CD8-positive, alpha-beta T cell (primary cell): ENCODE measurements at regions of chr12 and their contacts with region 1.

Region 1: GRCh38 chr12:12645485-12645884 is 33.8 kb downstream of the CREBL2 start:
- DNase-seq: peak in 8 of 9 experiments; percentile 9 to 79 (median 48)
- ATAC-seq: peak; percentile 97
- H3K4me3 ChIP-seq: no peak overlapping the region
- H3K4me3 Mint-ChIP-seq: no peak overlapping the region
- H3K27ac ChIP-seq: no peak overlapping the region
- H3K27ac Mint-ChIP-seq: peak overlapping the region; percentile 50
- H3K4me1 ChIP-seq: no peaks in the 10 kb centered on the region
- H3K4me1 Mint-ChIP-seq: peaks cover 5% of the 10 kb centered on the region
- H3K27me3 ChIP-seq: no peaks in the 10 kb centered on the region
- H3K27me3 Mint-ChIP-seq: no peaks in the 10 kb centered on the region
- CTCF ChIP-seq: peak; percentile 64

Region 2: DNA sequence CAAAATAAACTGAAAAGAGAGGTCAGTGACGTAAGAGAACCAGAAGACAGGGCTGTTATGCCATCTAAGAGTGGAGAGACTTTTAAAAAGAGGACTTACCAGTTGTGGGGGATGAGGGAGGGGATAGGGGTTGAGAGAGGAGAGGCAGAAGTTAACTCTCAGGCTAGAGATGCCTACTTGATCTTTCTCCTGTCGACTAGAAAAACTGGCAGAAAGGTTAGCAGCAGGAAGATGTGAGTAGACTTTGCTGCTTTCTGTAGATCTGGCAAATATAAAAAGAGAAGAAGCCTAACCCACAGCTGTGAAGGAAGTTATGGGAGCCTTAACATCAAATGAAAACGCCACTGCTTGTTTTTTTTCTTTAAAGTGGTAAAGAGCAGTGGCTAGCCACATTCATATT is 23.1 kb before region 1 on chr12:
- CTCF ChIA-PET with region 1: interaction called, 12 read pairs
- POLR2A ChIA-PET with region 1: no interaction called
- intact Hi-C with region 1: no loop called
- DNase-seq: peak in 4 of 9 experiments; percentile 19 to 74 (median 36)
- ATAC-seq: peak; percentile 91
- H3K4me3 ChIP-seq: peak overlapping the region in 1 of 2 experiments; percentile 15
- H3K4me3 Mint-ChIP-seq: peak overlapping the region; percentile 67
- H3K27ac ChIP-seq: peak overlapping the region; percentile 50 to 66
- H3K27ac Mint-ChIP-seq: peak overlapping the region; percentile 87
- H3K4me1 ChIP-seq: peaks cover 48% of the 10 kb centered on the region
- H3K4me1 Mint-ChIP-seq: peaks cover 73% of the 10 kb centered on the region
- H3K27me3 ChIP-seq: no peaks in the 10 kb centered on the region
- H3K27me3 Mint-ChIP-seq: no peaks in the 10 kb centered on the region
- CTCF ChIP-seq: no peak

Region 3: DNA sequence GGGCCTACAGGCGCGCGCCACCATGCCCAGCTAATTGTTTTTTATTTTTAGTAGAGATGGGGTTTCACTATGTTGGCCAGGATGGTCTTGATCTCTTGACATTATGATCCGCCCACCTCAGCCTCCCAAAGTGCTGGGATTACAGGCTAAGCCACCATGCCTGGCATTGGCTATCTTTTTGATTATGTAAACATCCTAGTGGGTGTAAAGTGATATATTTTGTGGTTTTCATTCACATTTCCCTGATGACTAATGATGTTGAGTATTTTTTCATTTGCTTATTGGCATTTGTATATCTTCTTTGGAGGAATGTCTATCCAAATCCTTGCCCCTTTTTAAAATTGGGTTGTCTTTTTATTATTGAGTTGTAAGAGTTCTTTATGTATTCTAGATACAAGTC is 17.5 kb before region 1 on chr12:
- CTCF ChIA-PET with region 1: interaction called, 39 read pairs
- POLR2A ChIA-PET with region 1: no interaction called
- intact Hi-C with region 1: no loop called
- DNase-seq: no peak
- ATAC-seq: no peak
- H3K4me3 ChIP-seq: no peak overlapping the region
- H3K4me3 Mint-ChIP-seq: no peak overlapping the region
- H3K27ac ChIP-seq: no peak overlapping the region
- H3K27ac Mint-ChIP-seq: no peak overlapping the region
- H3K4me1 ChIP-seq: peaks cover 44% of the 10 kb centered on the region
- H3K4me1 Mint-ChIP-seq: peaks cover 79% of the 10 kb centered on the region
- H3K27me3 ChIP-seq: no peaks in the 10 kb centered on the region
- H3K27me3 Mint-ChIP-seq: no peaks in the 10 kb centered on the region
- CTCF ChIP-seq: no peak

Region 4: DNA sequence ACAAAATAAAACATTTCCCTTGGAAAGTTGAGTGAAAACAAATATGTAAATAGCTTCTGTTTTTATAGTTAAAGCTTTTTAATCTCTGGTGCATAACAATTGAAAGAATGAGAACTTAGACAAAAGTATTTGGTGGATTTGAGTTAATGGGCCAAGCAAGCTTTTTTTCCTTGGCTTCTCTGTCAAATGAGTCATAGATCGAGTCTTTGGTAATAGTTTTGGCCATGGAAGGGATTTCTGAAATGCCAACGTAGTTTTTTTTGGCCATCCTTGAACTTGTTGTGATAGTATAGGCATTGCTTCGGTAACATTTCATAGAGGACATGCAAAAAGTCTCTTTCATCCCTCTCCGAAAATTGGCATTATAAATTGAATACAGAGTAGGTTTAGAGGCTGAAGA is 15.6 kb after region 1 on chr12:
- CTCF ChIA-PET with region 1: interaction called, 28 read pairs
- POLR2A ChIA-PET with region 1: no interaction called
- intact Hi-C with region 1: no loop called
- DNase-seq: no peak
- ATAC-seq: no peak
- H3K4me3 ChIP-seq: no peak overlapping the region
- H3K4me3 Mint-ChIP-seq: no peak overlapping the region
- H3K27ac ChIP-seq: no peak overlapping the region
- H3K27ac Mint-ChIP-seq: no peak overlapping the region
- H3K4me1 ChIP-seq: no peaks in the 10 kb centered on the region
- H3K4me1 Mint-ChIP-seq: peaks cover under 1% of the 10 kb centered on the region
- H3K27me3 ChIP-seq: no peaks in the 10 kb centered on the region
- H3K27me3 Mint-ChIP-seq: no peaks in the 10 kb centered on the region
- CTCF ChIP-seq: no peak

Region 5: GRCh38 chr12:12704593-12705230 is 59.2 kb after region 1 on chr12:
- CTCF ChIA-PET with region 1: interaction called, 5 read pairs
- POLR2A ChIA-PET with region 1: interaction called, 5 read pairs
- intact Hi-C with region 1: loop called (anchors 1 kb)
- DNase-seq: peak in 5 of 9 experiments; percentile 24 to 77 (median 35)
- ATAC-seq: peak; percentile 75
- H3K4me3 ChIP-seq: no peak overlapping the region
- H3K4me3 Mint-ChIP-seq: peak overlapping the region; percentile 50
- H3K27ac ChIP-seq: no peak overlapping the region
- H3K27ac Mint-ChIP-seq: peak overlapping the region; percentile 33
- H3K4me1 ChIP-seq: peaks cover 35% of the 10 kb centered on the region
- H3K4me1 Mint-ChIP-seq: peaks cover 21% of the 10 kb centered on the region
- H3K27me3 ChIP-seq: no peaks in the 10 kb centered on the region
- H3K27me3 Mint-ChIP-seq: no peaks in the 10 kb centered on the region
- CTCF ChIP-seq: peak; percentile 60